Mucosa of descending colon (tissue), 3 donors: ENCODE measurements at regions of chr12 and their contacts with region 1.

Region 1: GRCh38 chr12:20601668-20602280 is 93.4 kb upstream of the SLCO1C1 start:
- DNase-seq: no peak
- ATAC-seq: no peak
- H3K4me3 ChIP-seq: no peak overlapping the region
- H3K4me1 ChIP-seq: no peaks in the 10 kb centered on the region
- CTCF ChIP-seq: no peak

Region 2: DNA sequence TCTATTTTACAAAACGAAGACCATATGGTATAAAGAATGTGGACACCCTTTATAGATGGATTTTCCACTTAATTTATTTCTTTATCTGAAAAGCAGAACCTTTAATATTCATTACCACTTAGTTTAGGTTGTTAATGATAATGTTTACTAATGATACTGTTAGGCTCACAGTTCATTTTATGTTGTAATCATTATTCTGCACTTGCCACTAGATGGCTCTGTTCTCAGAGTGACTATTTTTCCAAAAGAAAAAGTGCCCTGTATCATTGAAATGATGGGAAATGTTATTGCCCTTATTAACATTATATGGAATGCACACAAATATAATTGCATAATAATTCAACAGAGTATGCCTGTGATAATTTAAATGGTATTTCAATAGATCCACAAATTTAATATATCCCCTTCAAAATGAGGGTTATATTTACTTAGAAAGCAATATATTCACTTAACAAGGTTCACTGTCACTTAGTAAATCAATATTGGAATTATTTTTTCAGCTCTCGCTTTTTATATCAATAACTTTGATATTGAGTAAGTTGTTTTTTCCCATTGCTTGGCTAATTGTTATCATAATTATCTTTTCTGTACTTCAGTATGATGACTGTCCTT is 137.8 kb before region 1 on chr12:
- intact Hi-C with region 1: loop called in 1 of 2 experiments (anchors 5 kb)
- DNase-seq: no peak
- ATAC-seq: no peak
- H3K4me3 ChIP-seq: no peak overlapping the region
- H3K4me1 ChIP-seq: no peaks in the 10 kb centered on the region
- CTCF ChIP-seq: peak; percentile 33